CD14-positive monocyte (primary cell): ENCODE measurements at regions of chr16 and their contacts with region 1.

Region 1: DNA sequence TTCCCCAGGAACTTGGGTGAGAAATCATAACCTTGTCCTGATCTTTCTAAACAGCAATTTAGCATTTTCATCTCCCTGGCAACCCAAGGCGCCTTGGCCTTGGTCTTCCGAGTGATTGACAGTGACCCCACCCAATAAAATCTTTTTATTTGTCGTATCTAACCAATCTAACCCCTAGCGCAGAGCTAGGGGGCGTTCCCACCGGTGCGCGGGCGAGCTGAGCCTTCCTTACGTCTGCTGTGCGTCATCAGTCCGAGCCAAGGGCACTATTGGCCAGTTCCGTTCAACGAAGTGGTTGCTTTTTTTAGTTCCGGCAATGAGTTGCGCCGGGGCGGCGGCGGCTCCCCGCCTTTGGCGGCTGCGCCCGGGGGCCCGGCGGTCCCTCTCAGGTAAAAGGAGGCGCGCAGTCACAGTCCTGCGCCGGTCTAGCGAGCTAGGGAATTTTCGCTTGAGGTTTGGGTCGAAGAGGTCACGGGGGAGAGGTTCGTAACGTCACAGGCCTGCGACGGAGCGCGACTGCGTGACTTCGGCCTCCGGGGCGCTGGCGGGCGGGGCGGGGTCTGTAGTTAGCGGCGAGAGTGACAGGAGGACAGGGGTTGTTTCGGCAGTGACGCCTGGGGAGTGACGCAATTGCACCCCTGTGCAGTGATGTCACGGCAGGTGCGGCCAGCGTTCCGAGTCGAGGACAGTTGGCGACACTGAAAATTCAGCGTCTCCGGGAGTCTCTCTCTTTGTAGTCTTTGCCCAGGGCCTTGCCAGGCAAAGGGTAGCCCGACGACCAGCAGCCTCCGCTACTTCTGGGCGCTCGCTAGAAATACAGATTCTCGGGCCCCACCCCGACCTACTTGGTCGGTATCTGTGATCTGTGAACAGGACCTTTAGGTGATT is at the start of gene COQ7:
- DNase-seq: peak; percentile 100
- H3K4me3 ChIP-seq: peak within 1 kb of the TSS; percentile 61 to 85 (median 76)
- H3K4me3 Mint-ChIP-seq: peak within 1 kb of the TSS; percentile 82 to 89
- H3K27ac ChIP-seq: peak within 1 kb of the TSS; percentile 92 to 99
- H3K27ac Mint-ChIP-seq: peak within 1 kb of the TSS; percentile 98 to 99 (median 99)
- H3K4me1 ChIP-seq: peaks cover 19 to 21% of the 10 kb centered on the region in 2 donors
- H3K4me1 Mint-ChIP-seq: peaks cover 17% of the 10 kb centered on the region
- H3K27me3 ChIP-seq: no peaks in the 10 kb centered on the region
- H3K27me3 Mint-ChIP-seq: peaks cover 0 to 3% (median 2%) of the 10 kb centered on the region in 3 donors
- CTCF ChIP-seq: no peak
- polyA plus RNA-seq, gene COQ7: 6.5 to 13.3 (median 12.2) TPM

Region 2: DNA sequence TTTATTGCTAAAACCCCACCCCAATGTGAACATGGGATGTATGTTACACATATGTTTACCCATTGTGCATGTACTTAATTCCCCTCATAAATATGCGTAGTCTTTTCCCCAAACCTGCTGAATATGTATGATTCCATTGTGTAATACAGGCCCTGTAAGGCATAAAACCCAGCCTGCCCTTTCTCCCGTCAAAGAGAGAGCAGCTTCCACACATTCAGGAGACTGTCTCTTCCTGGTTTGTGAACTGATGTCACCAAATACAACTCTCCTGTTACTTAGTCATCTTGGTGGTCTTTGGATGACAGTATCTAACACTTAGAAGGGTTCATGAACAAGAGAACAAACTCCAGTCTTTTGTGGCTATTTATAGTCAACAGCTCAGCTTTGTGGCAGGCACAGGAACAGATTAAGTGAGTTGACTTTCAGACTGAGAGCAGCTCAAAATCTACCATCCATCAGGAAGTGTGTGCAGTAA is 108.5 kb before region 1 on chr16:
- intact Hi-C with region 1: no loop called
- DNase-seq: no peak
- H3K4me3 ChIP-seq: no peak overlapping the region
- H3K4me3 Mint-ChIP-seq: no peak overlapping the region
- H3K27ac ChIP-seq: peak overlapping the region in 1 of 2 donors; percentile 20
- H3K27ac Mint-ChIP-seq: no peak overlapping the region
- H3K4me1 ChIP-seq: peaks cover 0 to 9% of the 10 kb centered on the region in 2 donors
- H3K4me1 Mint-ChIP-seq: peaks cover 17% of the 10 kb centered on the region
- H3K27me3 ChIP-seq: no peaks in the 10 kb centered on the region
- H3K27me3 Mint-ChIP-seq: peaks cover 2 to 8% (median 6%) of the 10 kb centered on the region in 3 donors
- CTCF ChIP-seq: no peak

Region 3: GRCh38 chr16:18979936-18980335 is 87.7 kb before region 1 on chr16:
- intact Hi-C with region 1: loop called in 1 of 2 experiments (anchors 10 kb)
- DNase-seq: no peak
- H3K4me3 ChIP-seq: no peak overlapping the region
- H3K4me3 Mint-ChIP-seq: no peak overlapping the region
- H3K27ac ChIP-seq: no peak overlapping the region
- H3K27ac Mint-ChIP-seq: no peak overlapping the region
- H3K4me1 ChIP-seq: peaks cover 0 to 7% of the 10 kb centered on the region in 2 donors
- H3K4me1 Mint-ChIP-seq: peaks cover 4% of the 10 kb centered on the region
- H3K27me3 ChIP-seq: peaks cover 10 to 18% of the 10 kb centered on the region in 2 donors
- H3K27me3 Mint-ChIP-seq: peaks cover 31 to 44% (median 36%) of the 10 kb centered on the region in 3 donors
- CTCF ChIP-seq: no peak

Region 4: GRCh38 chr16:19027416-19027815 is 40.2 kb before region 1 on chr16:
- intact Hi-C with region 1: no loop called
- DNase-seq: no peak
- H3K4me3 ChIP-seq: no peak overlapping the region
- H3K4me3 Mint-ChIP-seq: no peak overlapping the region
- H3K27ac ChIP-seq: no peak overlapping the region
- H3K27ac Mint-ChIP-seq: no peak overlapping the region
- H3K4me1 ChIP-seq: no peaks in the 10 kb centered on the region
- H3K4me1 Mint-ChIP-seq: no peaks in the 10 kb centered on the region
- H3K27me3 ChIP-seq: no peaks in the 10 kb centered on the region
- H3K27me3 Mint-ChIP-seq: peaks cover 0 to 6% (median 5%) of the 10 kb centered on the region in 3 donors
- CTCF ChIP-seq: no peak

Region 5: DNA sequence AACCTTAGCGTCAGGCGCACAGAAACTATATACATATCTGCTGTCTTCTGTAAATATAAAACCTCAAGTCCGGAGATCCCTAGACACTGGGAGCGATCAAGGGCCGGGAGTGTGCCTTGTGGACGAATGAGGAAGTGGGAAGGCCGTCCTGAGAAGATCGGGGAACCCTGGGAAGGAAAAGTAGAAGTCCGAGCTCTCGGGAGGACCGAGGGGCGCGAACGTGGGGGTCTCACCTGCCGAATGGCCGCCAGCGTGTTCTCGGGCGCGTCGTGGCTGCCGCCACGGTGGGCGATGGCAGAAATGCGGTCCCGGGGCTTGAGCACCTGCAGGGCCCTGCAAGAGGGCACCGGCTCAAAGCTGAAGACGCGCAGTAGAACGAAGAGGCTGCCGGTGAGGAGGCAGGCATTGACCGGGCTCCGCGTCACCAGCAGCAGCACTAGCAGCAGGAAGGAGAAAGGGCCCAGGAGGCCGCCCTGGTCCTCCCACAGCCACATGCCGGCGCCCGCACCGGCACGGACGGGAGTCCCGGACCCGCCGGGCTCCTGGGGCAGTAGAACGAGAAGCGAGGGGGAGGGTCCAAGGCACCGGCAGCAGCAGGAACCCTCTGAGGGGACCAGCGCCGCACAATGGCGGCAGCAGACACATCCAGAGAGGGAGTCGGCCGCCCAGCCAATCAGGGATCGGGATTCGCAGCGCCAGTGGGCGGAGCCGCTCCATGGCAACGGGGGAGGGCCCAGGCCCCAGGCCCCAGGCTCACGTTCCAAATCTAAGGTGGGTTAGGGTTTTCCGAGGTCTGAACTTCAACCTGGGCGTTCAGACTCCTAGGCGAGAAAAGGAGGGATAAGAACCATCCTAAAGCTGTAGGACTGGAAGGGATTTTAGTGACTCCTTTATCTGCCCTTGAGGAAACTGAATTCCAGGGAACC is 454.1 kb after region 1 on chr16 and contains the start of gene GDE1:
- intact Hi-C with region 1: loop called in 1 of 2 experiments (anchors 5 kb)
- DNase-seq: peak; percentile 81 to 89 (median 86)
- H3K4me3 ChIP-seq: peak within 1 kb of the TSS; percentile 71 to 97 (median 88)
- H3K4me3 Mint-ChIP-seq: peak within 1 kb of the TSS; percentile 95 to 98
- H3K27ac ChIP-seq: peak within 1 kb of the TSS; percentile 81 to 91
- H3K27ac Mint-ChIP-seq: peak within 1 kb of the TSS; percentile 87 to 94 (median 93)
- H3K4me1 ChIP-seq: peaks cover 34 to 63% of the 10 kb centered on the region in 2 donors
- H3K4me1 Mint-ChIP-seq: peaks cover 48% of the 10 kb centered on the region
- H3K27me3 ChIP-seq: no peaks in the 10 kb centered on the region
- H3K27me3 Mint-ChIP-seq: peaks cover 0 to 2% (median 0%) of the 10 kb centered on the region in 3 donors
- CTCF ChIP-seq: peak; percentile 24
- polyA plus RNA-seq, gene GDE1: 30.6 to 75.5 (median 71.7) TPM

Region 6: DNA sequence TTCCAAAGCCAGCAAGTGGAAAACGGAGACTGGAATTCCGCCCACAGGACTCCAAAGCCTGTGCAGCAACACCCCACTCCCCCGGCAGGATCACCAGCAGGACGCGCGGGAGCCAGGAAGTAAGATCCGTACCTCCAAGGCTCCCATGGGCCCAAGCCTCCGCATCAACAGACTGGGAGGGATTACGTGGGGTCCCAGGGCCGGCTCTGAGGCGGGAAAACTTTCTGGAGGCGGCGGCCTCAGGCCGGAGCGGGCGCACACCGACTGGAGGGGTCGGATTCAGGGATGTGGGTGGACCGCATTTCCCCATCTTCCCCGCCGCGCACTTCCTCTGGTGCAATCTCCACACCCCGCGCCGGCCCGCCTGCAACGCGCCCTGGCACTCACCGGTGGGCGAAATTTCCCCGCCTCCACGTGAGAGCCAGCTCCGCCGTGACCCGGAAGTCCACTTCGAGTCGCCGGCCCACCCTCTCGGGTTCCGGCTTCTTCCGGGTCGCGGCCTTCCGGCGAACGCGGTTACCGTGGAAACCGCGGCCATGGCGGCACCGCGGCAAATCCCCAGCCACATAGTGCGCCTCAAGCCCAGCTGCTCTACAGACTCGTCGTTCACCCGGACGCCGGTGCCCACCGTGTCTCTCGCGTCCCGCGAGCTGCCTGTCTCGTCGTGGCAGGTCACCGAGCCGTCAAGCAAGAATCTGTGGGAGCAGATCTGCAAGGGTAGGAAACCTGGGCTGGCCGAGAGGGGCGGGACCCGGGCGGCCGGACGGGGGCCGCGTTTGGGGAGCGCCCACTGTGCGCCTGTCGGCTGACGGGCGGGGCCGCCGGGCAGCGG is 650.4 kb after region 1 on chr16 and contains the starts of genes IQCK and KNOP1:
- intact Hi-C with region 1: loop called in 1 of 2 experiments (anchors 10 kb)
- DNase-seq: peak; percentile 81 to 93 (median 86)
- H3K4me3 ChIP-seq: peak within 1 kb of the TSS; percentile 82 to 99 (median 97)
- H3K4me3 Mint-ChIP-seq: peak within 1 kb of the TSS; percentile 88 to 95
- H3K27ac ChIP-seq: peak within 1 kb of the TSS; percentile 30 to 61
- H3K27ac Mint-ChIP-seq: peak within 1 kb of the TSS; percentile 10 to 85 (median 75)
- H3K4me1 ChIP-seq: peaks cover 14 to 21% of the 10 kb centered on the region in 2 donors
- H3K4me1 Mint-ChIP-seq: peaks cover 26% of the 10 kb centered on the region
- H3K27me3 ChIP-seq: no peaks in the 10 kb centered on the region
- H3K27me3 Mint-ChIP-seq: peaks cover 0 to 3% (median 0%) of the 10 kb centered on the region in 3 donors
- CTCF ChIP-seq: no peak
- polyA plus RNA-seq, gene IQCK: 0.52 to 1.2 (median 0.58) TPM
- polyA plus RNA-seq, gene KNOP1: 1.5 to 2.8 (median 2.4) TPM